ENCODE measurements at regions of chr3 and their contacts with region 1.

Region 1: GRCh38 chr3:43286115-43286840 is at the start of gene SNRK:
- DNase-seq: peak; percentile 81 to 98 (median 94)
- ATAC-seq: peak; percentile 69 to 81
- H3K4me3 Mint-ChIP-seq: peak within 1 kb of the TSS; percentile 94 to 100 (median 99)
- H3K27ac Mint-ChIP-seq: peak within 1 kb of the TSS; percentile 96 to 100 (median 100)
- H3K4me1 Mint-ChIP-seq: peaks cover 30 to 42% (median 35%) of the 10 kb centered on the region in 4 donors
- H3K27me3 Mint-ChIP-seq: peaks cover 0 to 2% (median 0%) of the 10 kb centered on the region in 5 donors
- polyA plus RNA-seq, gene SNRK: 71.1 to 97.5 (median 90.6) TPM

Region 2: DNA sequence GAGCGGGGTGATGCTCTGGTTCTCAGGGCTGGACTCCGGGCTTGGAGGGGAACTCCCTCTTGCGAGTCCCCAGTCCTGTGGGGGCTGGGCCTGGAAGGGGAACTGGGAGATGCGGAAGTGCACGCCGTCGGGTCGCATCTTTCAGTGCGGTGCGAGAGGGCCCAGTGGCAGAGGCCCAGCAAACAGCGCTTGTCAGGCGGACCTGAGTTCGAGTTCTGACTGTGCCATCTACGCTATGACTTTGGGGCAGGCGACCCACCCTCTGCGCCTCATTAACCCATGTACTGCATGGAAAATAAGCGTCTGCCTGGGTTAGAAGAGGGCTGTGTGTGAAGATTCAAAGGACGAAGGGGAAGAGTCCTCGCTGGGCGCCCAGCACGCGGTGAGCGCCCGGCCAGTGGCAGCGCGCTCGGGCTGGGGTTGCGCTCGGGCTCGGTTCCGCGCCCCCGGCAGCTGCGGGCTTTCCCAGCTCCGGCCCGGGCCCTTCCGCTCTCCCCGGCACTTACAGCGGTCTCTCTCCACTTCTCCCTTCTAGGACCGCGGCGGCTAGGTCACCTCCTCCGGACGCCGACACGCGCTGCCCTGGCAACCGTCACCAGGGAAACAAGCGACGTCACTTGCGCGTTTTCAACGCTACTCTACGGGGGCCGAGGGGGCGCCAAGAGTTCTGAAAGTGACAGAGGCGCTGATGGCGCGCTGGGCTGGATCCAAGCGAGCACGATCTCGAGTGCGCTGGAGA is 513.4 kb before region 1 on chr3 and contains the start of gene CCDC13:
- POLR2A ChIA-PET with region 1: no interaction called
- DNase-seq: peak; percentile 73 to 96 (median 86)
- ATAC-seq: peak; percentile 85 to 88
- H3K4me3 Mint-ChIP-seq: peak within 1 kb of the TSS; percentile 87 to 98 (median 91)
- H3K27ac Mint-ChIP-seq: peak within 1 kb of the TSS; percentile 48 to 98 (median 96)
- H3K4me1 Mint-ChIP-seq: peaks cover 9 to 16% (median 11%) of the 10 kb centered on the region in 4 donors
- H3K27me3 Mint-ChIP-seq: no peaks in the 10 kb centered on the region
- polyA plus RNA-seq, gene CCDC13: not detected

Region 3: DNA sequence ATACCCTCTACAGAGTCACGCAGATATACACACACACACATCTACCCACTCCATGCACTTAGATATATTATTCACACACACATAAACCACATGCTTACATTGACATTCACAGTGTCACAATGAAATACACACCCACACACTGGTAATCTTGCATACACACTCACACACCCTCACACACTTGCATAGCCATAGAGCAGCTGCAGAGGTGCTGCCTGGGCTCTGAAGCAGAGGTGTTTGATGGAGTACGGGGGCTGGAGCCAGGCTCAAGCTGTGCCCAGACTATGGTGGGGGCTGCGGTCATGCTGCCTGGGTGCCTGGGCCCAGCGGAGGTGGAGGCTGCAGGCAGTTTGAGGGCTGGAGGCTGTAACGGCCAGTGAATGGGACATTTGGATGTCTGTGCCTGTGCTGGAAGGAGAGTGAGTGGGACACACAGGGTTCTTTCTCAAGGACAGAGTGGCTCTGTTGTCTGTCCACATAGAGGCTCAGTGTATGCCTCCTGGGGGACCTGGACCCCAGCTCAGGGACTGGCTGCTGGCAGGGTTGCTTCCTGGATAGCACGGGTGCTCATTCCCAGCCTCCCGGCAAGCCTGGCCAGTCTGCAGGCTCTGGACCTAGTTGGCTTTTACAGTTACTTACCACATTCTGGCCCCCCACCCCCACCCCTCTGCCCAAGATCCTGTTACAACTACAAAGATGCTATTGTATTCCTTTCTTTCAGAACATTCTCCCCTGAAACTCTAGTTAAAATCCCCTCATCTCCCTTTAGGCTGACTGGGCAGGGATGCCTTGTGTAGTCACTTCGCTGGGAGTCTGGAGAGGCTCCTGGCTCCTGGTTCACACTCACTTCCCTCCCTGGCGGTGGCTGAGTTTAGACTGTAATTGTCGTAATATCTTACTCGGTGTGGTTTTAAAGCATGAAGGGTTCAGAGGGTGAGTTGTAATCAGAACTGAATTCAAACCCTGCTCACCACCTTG is 294.6 kb before region 1 on chr3:
- POLR2A ChIA-PET with region 1: no interaction called
- DNase-seq: no peak
- ATAC-seq: no peak
- H3K4me3 Mint-ChIP-seq: peak overlapping the region in 1 of 10 donors; percentile 31
- H3K27ac Mint-ChIP-seq: no peak overlapping the region
- H3K4me1 Mint-ChIP-seq: peaks cover 0 to 9% (median 5%) of the 10 kb centered on the region in 4 donors
- H3K27me3 Mint-ChIP-seq: peaks cover 0 to under 1% (median 0%) of the 10 kb centered on the region in 5 donors

Region 4: DNA sequence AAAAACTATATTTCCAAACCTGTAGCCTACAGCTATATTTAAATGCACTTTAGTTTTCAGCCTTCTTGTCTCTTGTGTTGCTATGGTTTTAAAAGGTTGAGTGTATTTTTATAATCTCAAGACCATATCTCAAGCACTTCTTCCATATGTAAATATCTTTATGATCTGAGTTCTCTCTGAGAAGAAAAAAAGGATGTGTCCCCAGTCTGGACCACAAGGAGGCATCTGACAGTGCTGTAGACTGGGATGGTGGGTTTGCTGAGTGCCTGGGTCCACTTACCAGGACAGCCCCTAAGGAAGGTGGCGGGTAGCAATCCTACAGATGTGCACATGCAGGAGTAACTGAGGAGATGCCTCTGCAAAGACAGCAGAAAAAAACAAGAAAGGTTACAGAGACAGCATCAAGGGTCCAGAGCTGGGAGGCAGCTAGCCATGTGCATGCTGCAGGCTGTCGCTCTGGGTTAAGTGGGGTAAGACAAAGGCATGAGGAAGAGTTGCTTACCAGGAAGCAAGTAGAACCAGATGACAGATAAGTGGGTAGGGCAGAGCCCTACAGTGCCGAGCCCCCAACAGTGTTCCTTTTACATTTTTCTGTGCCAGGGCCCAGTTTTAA is 70.5 kb before region 1 on chr3:
- POLR2A ChIA-PET with region 1: interaction called, 20 read pairs
- DNase-seq: peak in 1 of 10 donors; percentile 29
- ATAC-seq: peak; percentile 62 to 71
- H3K4me3 Mint-ChIP-seq: peak overlapping the region in 9 of 10 donors; percentile 11 to 83 (median 63)
- H3K27ac Mint-ChIP-seq: peak overlapping the region; percentile 88 to 95 (median 90)
- H3K4me1 Mint-ChIP-seq: peaks cover 37 to 62% (median 58%) of the 10 kb centered on the region in 4 donors
- H3K27me3 Mint-ChIP-seq: no peaks in the 10 kb centered on the region

Region 5: DNA sequence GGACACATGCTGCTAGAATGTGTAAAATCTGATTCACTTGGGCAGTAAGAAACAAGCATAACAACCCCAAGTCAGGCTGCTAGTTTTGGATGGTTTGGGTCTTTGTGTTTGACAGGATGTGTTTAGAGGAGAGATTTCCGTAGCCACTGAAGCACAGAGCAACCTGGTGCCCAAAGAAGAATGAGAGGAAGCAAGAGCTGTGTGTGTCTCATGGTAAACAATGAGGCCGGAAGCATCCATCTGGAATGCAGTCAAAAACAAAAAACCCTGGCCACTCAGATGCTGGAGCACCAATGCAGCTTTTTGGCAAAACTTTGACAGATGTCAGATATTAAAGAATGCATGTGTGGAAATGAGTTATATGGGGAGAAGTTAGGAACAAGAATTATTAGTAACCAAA is 39.3 kb before region 1 on chr3:
- POLR2A ChIA-PET with region 1: interaction called, 13 read pairs
- DNase-seq: peak in 4 of 10 donors; percentile 6 to 58 (median 46)
- ATAC-seq: peak; percentile 86 to 92
- H3K4me3 Mint-ChIP-seq: peak overlapping the region in 9 of 10 donors; percentile 9 to 76 (median 56)
- H3K27ac Mint-ChIP-seq: peak overlapping the region; percentile 68 to 94 (median 86)
- H3K4me1 Mint-ChIP-seq: peaks cover 43 to 68% (median 66%) of the 10 kb centered on the region in 4 donors
- H3K27me3 Mint-ChIP-seq: no peaks in the 10 kb centered on the region